Esophagus muscularis mucosa (tissue), 4 donors: ENCODE measurements at regions of chr3 and their contacts with region 1.

Region 1: GRCh38 chr3:121654493-121655385 is 6.0 kb downstream of the HCLS1 start:
- DNase-seq: no peak
- H3K4me3 ChIP-seq: no peak overlapping the region
- H3K27ac ChIP-seq: no peak overlapping the region
- H3K4me1 ChIP-seq: peaks cover 0 to 7% (median under 1%) of the 10 kb centered on the region in 4 donors
- H3K27me3 ChIP-seq: no peaks in the 10 kb centered on the region
- CTCF ChIP-seq: no peak
- EP300 ChIP-seq: no peak
- POLR2A ChIP-seq: no peak

Region 2: GRCh38 chr3:121545574-121546455 is 108.9 kb before region 1 on chr3 and contains the start of gene POLQ:
- intact Hi-C with region 1: loop called (anchors 10 kb)
- DNase-seq: peak; percentile 96
- H3K4me3 ChIP-seq: peak within 1 kb of the TSS; percentile 57 to 64 (median 61)
- H3K27ac ChIP-seq: peak within 1 kb of the TSS; percentile 66 to 79 (median 74)
- H3K4me1 ChIP-seq: peaks cover 7 to 15% (median 9%) of the 10 kb centered on the region in 4 donors
- H3K27me3 ChIP-seq: no peaks in the 10 kb centered on the region
- CTCF ChIP-seq: no peak
- EP300 ChIP-seq: no peak
- POLR2A ChIP-seq: no peak
- total RNA-seq, gene POLQ: under 0.01 to 0.40 (median 0.15) TPM

Region 3: DNA sequence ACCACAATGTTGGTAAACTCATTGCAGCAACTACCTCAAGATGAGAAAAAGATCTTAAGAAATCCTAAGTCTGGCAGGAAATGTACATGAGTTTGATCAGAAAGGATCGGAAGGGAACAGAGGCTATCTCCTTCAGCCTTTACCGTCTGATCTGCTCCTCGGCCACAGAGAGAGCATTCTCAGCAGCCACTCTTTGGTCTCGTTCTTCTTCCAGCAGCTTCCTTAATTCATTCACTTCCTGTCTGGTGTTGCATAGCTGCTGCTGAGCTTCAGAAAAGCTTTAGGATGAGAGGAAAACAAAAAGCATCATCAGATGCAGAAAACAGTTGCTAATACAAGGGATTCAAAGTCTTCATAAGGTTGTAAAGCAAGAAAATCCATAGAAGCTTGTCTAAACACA is 12.6 kb after region 1 on chr3:
- intact Hi-C with region 1: no loop called
- DNase-seq: no peak
- H3K4me3 ChIP-seq: no peak overlapping the region
- H3K27ac ChIP-seq: peak overlapping the region in 1 of 4 donors; percentile 9
- H3K4me1 ChIP-seq: no peaks in the 10 kb centered on the region
- H3K27me3 ChIP-seq: no peaks in the 10 kb centered on the region
- CTCF ChIP-seq: no peak
- EP300 ChIP-seq: no peak
- POLR2A ChIP-seq: no peak